ENCODE measurements at regions of chr20 and their contacts with region 1.

Region 1: DNA sequence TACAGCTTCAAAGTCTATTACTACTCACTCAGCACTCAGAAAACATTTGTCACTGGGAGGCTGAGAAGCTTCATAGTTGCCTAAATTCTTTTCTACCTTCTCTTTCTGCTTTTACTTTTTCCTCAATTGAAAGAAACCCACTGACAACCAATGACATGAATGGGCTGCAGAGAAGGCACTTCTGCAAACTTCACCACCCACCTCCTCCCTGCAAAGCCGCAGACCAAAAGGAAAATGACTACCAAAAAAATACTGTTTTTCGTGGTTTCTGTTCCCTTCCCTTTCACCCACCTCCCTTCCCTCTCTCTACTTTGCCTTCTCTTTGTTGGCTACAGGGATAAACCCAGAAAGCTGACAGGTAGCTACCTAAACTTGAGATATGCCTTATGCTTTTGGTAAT is 3.2 kb downstream of the GNAS-AS1 start:
- DNase-seq: no peak
- ATAC-seq: no peak
- H3K4me3 ChIP-seq: no peak overlapping the region
- H3K27ac ChIP-seq: no peak overlapping the region
- H3K4me1 ChIP-seq: no peaks in the 10 kb centered on the region
- H3K27me3 ChIP-seq: peaks cover 0 to 48% of the 10 kb centered on the region in 2 experiments; a peak in 3 of 5 replicates
- CTCF ChIP-seq: no peak
- EP300 ChIP-seq: no peak
- POLR2A ChIP-seq: no peak
- RAD21 ChIP-seq: no peak

Region 2: DNA sequence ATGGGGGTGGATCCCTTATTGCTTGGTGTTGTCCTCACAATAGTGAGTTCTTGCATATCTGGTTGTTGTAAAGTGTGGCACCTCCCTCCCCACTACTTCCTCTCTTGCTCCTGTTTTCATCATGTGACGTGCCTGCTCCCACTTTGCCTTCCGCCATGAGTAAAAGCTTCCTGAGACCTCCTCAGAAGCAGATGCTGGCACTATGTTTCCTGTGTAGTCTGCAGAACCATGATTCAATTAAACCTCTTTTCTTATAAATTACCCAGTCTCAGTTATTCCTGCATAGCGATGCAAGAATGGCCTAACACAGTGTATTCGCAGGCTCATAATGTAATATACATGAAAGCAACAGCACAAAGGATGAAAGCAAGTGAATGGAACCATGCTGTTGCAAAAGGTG is 590.6 kb before region 1 on chr20:
- CTCF ChIA-PET with region 1: no interaction called
- POLR2A ChIA-PET with region 1: no interaction called
- in situ Hi-C with region 1: no loop called
- intact Hi-C with region 1: no loop called
- DNase-seq: no peak
- ATAC-seq: no peak
- H3K4me3 ChIP-seq: no peak overlapping the region
- H3K27ac ChIP-seq: no peak overlapping the region
- H3K4me1 ChIP-seq: peaks cover 7% of the 10 kb centered on the region
- H3K27me3 ChIP-seq: no peaks in the 10 kb centered on the region
- CTCF ChIP-seq: no peak
- EP300 ChIP-seq: no peak
- POLR2A ChIP-seq: no peak
- RAD21 ChIP-seq: no peak

Region 3: DNA sequence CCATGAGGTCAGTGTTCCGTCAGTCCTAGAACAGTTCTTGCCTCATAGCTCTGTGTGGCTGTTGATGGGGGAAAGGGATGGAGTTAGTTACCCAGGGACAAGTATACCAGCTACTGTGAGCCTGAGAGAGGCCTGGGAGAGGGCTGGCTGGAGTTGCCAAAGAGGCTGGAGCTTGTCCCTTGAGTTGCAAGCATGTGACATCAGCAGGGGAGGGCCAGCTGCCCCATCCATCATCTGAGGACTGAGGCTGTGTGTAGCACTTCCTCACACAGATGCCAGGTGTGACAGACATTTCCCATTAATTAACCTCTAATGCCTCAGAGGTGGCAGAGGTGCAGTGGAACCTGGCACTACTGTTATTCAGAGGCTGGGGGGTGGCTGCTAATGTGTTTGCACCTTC is 888.5 kb after region 1 on chr20:
- CTCF ChIA-PET with region 1: no interaction called
- POLR2A ChIA-PET with region 1: no interaction called
- in situ Hi-C with region 1: no loop called
- intact Hi-C with region 1: loop called (anchors 5 kb)
- DNase-seq: no peak
- ATAC-seq: no peak
- H3K4me3 ChIP-seq: no peak overlapping the region
- H3K27ac ChIP-seq: no peak overlapping the region
- H3K4me1 ChIP-seq: no peaks in the 10 kb centered on the region
- H3K27me3 ChIP-seq: peaks cover 2 to 13% of the 10 kb centered on the region in 2 experiments; a peak in 4 of 5 replicates
- CTCF ChIP-seq: no peak
- EP300 ChIP-seq: no peak
- POLR2A ChIP-seq: no peak
- RAD21 ChIP-seq: no peak

Measured in HepG2 (cell line).